Motor neuron (in vitro differentiated cells): ENCODE measurements at regions of chr10 and their contacts with region 1.

Region 1: GRCh38 chr10:54009672-54010071 is 791.4 kb downstream of the PCDH15 start:
- ATAC-seq: no peak
- H3K4me3 ChIP-seq: no peak overlapping the region
- H3K27ac ChIP-seq: no peak overlapping the region
- H3K4me1 ChIP-seq: no peaks in the 10 kb centered on the region

Region 2: DNA sequence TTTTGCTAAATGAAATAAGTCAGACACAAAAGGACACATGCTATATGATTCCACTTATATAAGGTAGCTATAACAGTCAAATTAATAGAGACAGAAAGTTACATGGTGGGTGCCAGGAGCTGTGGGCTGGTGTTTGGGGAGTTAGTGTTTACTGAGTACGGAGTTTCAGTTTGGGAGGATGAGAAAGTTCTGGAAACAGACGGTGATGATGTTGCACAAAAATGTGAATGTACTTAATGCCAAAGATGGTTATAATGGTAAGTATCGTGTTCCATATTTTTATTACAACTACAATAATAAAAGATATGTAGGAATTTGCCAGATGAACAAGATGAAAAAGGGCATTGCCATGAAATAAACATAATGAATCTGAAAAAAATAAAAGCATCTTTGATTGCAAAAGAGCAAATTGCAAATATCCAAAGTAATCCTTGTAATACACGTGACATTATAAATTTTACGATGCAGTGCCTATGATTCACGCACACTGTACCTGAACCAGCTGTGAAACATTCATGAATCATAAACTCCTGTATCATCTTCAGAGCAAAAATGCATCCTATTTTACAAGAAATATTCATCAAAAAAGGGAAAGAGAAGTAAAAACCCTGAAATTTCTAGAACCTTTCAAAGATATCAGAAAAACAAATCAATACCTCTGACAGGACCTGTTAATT is 114.7 kb after region 1 on chr10:
- in situ Hi-C with region 1: loop called in 1 of 9 experiments (anchors 25 kb)
- ATAC-seq: peak in 1 of 8 experiments; percentile 71
- H3K4me3 ChIP-seq: no peak overlapping the region
- H3K27ac ChIP-seq: no peak overlapping the region
- H3K4me1 ChIP-seq: no peaks in the 10 kb centered on the region

Region 3: GRCh38 chr10:54396004-54396403 is 386.3 kb after region 1 on chr10:
- in situ Hi-C with region 1: loop called in 1 of 9 experiments (anchors 25 kb)
- ATAC-seq: no peak
- H3K4me3 ChIP-seq: no peak overlapping the region
- H3K27ac ChIP-seq: no peak overlapping the region
- H3K4me1 ChIP-seq: no peaks in the 10 kb centered on the region